Adrenal gland (tissue), 19 donors: ENCODE measurements at regions of chr6 and their contacts with region 1.

Region 1: GRCh38 chr6:35569011-35569461 is 56.3 kb upstream of the TULP1 start:
- DNase-seq: peak in 6 of 7 donors; percentile 25 to 77 (median 48)
- H3K4me3 ChIP-seq: no peak overlapping the region
- H3K27ac ChIP-seq: no peak overlapping the region
- H3K4me1 ChIP-seq: peaks cover 4 to 10% of the 10 kb centered on the region in 2 donors
- H3K27me3 ChIP-seq: no peaks in the 10 kb centered on the region
- CTCF ChIP-seq: peak in 5 of 6 experiments; percentile 10 to 41 (median 27)
- POLR2A ChIP-seq: no peak

Region 2: DNA sequence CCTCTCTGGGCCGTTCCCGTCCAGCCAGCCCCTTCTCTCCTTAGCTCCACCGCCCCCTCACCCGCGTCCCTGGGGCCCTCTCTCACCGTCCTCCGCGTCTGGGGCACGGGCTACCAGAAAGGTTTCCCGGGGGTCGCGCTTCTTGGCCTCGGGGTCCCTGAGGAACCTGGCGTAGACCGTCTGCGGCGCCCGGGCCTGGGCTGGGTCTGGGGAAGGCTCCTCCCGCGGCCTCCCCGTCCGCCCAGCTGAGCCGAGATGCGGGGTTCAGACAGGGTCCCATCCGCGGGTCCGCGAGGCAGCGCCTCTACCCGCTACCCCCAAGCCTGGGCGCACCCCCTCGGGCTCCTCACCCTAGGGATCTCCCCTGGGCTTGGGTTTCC is 57.5 kb before region 1 on chr6:
- intact Hi-C with region 1: loop called in 1 of 2 experiments (anchors 10 kb)
- DNase-seq: no peak
- H3K4me3 ChIP-seq: peak overlapping the region in 1 of 4 donors; percentile 29
- H3K27ac ChIP-seq: no peak overlapping the region
- H3K4me1 ChIP-seq: no peaks in the 10 kb centered on the region
- H3K27me3 ChIP-seq: peaks cover 10% of the 10 kb centered on the region
- CTCF ChIP-seq: no peak
- POLR2A ChIP-seq: no peak